ENCODE measurements at regions of chr3 and their contacts with region 1.

Region 1: GRCh38 chr3:58491506-58492402 is at the start of gene KCTD6:
- DNase-seq: peak; percentile 97
- H3K4me3 ChIP-seq: peak within 1 kb of the TSS; percentile 67 to 90 (median 86)
- H3K27ac ChIP-seq: peak within 1 kb of the TSS; percentile 21
- H3K4me1 ChIP-seq: peaks cover 16% of the 10 kb centered on the region
- H3K27me3 ChIP-seq: peaks cover 2 to 5% of the 10 kb centered on the region in 2 experiments
- CTCF ChIP-seq: peak; percentile 79 to 80
- POLR2A ChIP-seq: no peak
- total RNA-seq, gene KCTD6: 6.4 and 7.4 TPM in 2 replicates

Region 2: DNA sequence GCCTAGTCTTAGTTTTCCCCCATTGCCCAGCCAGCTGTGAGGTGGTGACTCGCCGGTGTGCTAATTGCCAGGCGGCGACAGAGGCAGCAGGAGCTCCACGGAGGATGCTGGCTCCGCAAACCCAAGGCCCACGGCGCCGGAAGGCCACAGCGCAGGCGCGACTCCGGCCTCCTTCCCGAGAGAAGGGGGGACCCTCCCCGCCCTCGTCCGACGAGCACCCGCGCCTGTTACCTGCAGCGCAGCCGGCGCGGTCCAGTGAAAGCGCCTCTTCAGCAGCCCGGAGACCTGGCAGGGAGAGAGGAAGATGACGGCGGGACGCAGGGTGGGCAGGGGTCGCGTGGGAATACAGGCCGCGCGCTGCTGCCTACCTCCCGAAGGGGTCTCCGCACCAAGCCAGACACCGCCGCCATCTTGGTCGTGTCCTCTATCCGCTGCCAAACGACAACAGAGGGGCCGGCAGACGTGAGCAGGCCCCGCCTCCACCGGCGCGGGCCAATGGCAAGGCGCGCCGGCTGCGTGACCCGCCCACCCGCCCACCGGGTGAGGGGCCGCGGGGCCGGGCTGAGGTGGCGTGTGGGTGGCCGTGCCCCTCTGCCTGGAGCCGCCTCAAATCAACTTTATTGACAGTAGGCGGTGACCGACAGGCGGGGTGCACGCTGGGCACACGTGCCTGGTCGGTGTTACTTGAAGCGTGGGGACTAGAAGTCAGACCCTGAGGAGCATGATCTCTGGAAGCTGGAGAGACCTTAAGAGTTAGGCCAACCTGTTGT is 58.2 kb before region 1 on chr3 and contains the start of gene PDHB:
- CTCF ChIA-PET with region 1: interaction called, 3 read pairs
- POLR2A ChIA-PET with region 1: no interaction called
- dilution Hi-C with region 1: no loop called
- intact Hi-C with region 1: loop called (anchors 1 kb)
- DNase-seq: peak; percentile 94
- H3K4me3 ChIP-seq: peak within 1 kb of the TSS; percentile 51 to 92 (median 85)
- H3K27ac ChIP-seq: peak within 1 kb of the TSS; percentile 69
- H3K4me1 ChIP-seq: peaks cover 5% of the 10 kb centered on the region
- H3K27me3 ChIP-seq: peaks cover 3 to 5% of the 10 kb centered on the region in 2 experiments
- CTCF ChIP-seq: no peak
- POLR2A ChIP-seq: peak; percentile 91
- total RNA-seq, gene PDHB: 59.3 and 60.8 TPM in 2 replicates

Region 3: DNA sequence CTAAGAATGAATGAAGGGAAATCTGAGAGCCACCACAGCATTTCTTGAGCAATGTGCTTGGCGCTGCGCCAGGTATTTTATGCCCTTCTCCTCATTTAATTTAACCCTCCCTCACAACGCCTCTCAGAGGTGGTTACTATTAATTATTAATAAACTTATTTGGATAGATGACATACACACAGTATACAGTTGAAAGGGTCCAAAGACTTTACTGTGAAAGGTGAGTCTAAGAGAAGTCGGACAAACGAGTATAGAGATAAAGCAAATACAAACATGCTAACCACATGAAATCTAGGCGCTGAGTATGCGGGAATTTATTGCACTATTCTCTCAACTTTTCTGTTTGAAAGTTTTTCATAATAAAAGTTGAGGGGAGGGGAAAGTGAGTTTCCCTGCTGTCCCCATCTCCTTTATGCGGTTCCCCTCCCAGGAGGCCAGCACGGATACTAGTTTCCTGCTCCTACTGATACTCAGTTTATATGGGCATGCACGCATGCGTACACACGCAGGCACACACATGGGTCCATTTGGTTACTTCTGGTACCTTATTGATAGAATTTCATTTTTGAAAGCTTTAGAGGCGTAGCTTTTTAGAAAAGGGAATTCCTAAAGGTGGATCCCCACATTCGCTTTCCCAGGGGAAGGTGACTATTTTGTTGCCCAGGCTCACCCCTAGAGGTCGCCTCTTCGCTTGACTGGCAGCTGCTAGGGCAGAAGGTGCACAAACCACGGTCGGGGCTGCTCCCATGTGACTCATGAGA is 28.4 kb before region 1 on chr3:
- CTCF ChIA-PET with region 1: interaction called, 27 read pairs
- POLR2A ChIA-PET with region 1: no interaction called
- dilution Hi-C with region 1: no loop called
- intact Hi-C with region 1: loop called (anchors 1 kb)
- DNase-seq: peak; percentile 64
- H3K4me3 ChIP-seq: peak overlapping the region in 1 of 3 experiments; percentile 16
- H3K27ac ChIP-seq: no peak overlapping the region
- H3K4me1 ChIP-seq: peaks cover 5% of the 10 kb centered on the region
- H3K27me3 ChIP-seq: no peaks in the 10 kb centered on the region
- CTCF ChIP-seq: peak; percentile 84 to 87
- POLR2A ChIP-seq: no peak

Region 4: GRCh38 chr3:58520403-58521335 is 28.9 kb after region 1 on chr3:
- CTCF ChIA-PET with region 1: interaction called, 10 read pairs
- POLR2A ChIA-PET with region 1: no interaction called
- dilution Hi-C with region 1: no loop called
- intact Hi-C with region 1: no loop called
- DNase-seq: no peak
- H3K4me3 ChIP-seq: no peak overlapping the region
- H3K27ac ChIP-seq: no peak overlapping the region
- H3K4me1 ChIP-seq: no peaks in the 10 kb centered on the region
- H3K27me3 ChIP-seq: no peaks in the 10 kb centered on the region
- CTCF ChIP-seq: no peak
- POLR2A ChIP-seq: no peak

Region 5: GRCh38 chr3:58526515-58526957 is 34.8 kb after region 1 on chr3:
- CTCF ChIA-PET with region 1: interaction called, 16 read pairs
- POLR2A ChIA-PET with region 1: no interaction called
- dilution Hi-C with region 1: no loop called
- intact Hi-C with region 1: loop called (anchors 1 kb)
- DNase-seq: peak; percentile 58
- H3K4me3 ChIP-seq: no peak overlapping the region
- H3K27ac ChIP-seq: no peak overlapping the region
- H3K4me1 ChIP-seq: peaks cover 18% of the 10 kb centered on the region
- H3K27me3 ChIP-seq: no peaks in the 10 kb centered on the region
- CTCF ChIP-seq: no peak
- POLR2A ChIP-seq: no peak

Measured in endothelial cell of umbilical vein (primary cell).